ENCODE measurements at regions of chr9 and their contacts with region 1.

Region 1: GRCh38 chr9:130107234-130107861 is 53.6 kb downstream of the GPR107 start:
- DNase-seq: peak; percentile 86 to 93
- H3K4me3 ChIP-seq: no peak overlapping the region
- H3K27ac ChIP-seq: no peak overlapping the region
- H3K4me1 ChIP-seq: no peaks in the 10 kb centered on the region
- H3K27me3 ChIP-seq: no peaks in the 10 kb centered on the region
- CTCF ChIP-seq: peak; percentile 71 to 84

Region 2: GRCh38 chr9:130343445-130343918 is 236.1 kb after region 1 on chr9:
- intact Hi-C with region 1: loop called (anchors 10 kb)
- DNase-seq: peak in 1 of 2 donors; percentile 66
- H3K4me3 ChIP-seq: no peak overlapping the region
- H3K27ac ChIP-seq: peak overlapping the region in 1 of 2 donors; percentile 30
- H3K4me1 ChIP-seq: no peaks in the 10 kb centered on the region
- H3K27me3 ChIP-seq: peaks cover 0 to 46% of the 10 kb centered on the region in 2 donors
- CTCF ChIP-seq: peak; percentile 43 to 71